Activated T-helper 2 cell treated with anti-CD3 and anti-CD28 coated beads, Interferon-gamma antibody, Interleukin-2, Interleukin-4, amounts not matched to agents 10 μg/mL and 5 μg/mL and 100 μg/mL, durations not matched to agents 14 hours and 24 hours and 36 hours (primary cell): ENCODE measurements at regions of chr1 and their contacts with region 1.

Region 1: GRCh38 chr1:114716304-114717170 is at the start of gene NRAS:
- DNase-seq: peak; percentile 92
- H3K4me3 Mint-ChIP-seq: peak within 1 kb of the TSS; percentile 95
- H3K27ac Mint-ChIP-seq: peak within 1 kb of the TSS; percentile 93
- H3K4me1 Mint-ChIP-seq: peaks cover 26% of the 10 kb centered on the region
- H3K27me3 Mint-ChIP-seq: no peaks in the 10 kb centered on the region
- total RNA-seq, gene NRAS: 63.3 and 64.5 TPM in 2 replicates

Region 2: DNA sequence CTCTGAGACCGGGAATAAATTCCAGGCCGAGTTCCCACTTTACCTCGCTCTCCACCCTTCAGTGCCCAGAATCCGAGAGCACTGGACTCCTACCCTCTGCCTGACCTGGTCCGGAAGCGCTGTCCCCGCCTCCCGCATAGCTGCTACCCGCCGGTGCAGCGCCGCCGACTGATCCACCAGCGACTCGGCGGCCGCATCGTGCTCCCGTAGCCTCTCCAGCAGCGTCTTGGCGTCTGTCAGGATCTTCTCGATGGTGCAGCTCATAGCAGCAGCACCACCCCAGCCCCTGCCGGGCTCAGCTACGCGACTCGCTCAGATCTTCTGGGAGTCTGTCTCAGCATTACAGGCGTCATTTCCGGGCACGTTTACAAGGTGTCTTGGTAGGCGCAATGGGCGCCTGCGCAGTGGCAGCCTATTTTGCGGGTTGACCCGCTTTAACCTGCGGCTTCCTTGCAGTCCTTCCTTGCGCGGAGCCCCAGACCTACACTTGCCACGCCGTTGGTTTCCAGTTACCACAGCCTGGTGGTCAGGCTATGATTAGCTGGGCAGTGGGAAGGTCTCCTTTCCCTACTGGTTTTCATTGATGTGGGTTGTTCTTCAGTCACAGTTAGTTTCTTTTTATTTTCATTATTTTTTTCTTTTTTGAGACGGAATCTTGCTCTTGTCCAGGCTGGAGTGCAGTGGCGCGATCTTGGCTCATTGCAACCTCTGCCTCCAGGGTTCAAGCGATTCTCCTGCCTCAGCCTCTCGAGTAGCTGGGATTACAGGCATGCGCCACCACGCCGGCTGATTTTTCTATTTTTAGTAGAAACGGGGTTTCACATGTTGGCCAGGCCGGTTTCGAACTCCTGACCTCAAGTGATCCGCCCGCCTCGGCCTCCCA is 64.0 kb after region 1 on chr1 and contains the start of gene SIKE1:
- intact Hi-C with region 1: loop called (anchors 1 kb)
- DNase-seq: peak; percentile 93
- H3K4me3 Mint-ChIP-seq: peak within 1 kb of the TSS; percentile 99
- H3K27ac Mint-ChIP-seq: peak within 1 kb of the TSS; percentile 98
- H3K4me1 Mint-ChIP-seq: peaks cover 21% of the 10 kb centered on the region
- H3K27me3 Mint-ChIP-seq: peaks cover 6% of the 10 kb centered on the region
- total RNA-seq, gene SIKE1: 57.6 and 64.2 TPM in 2 replicates